PC-3 (cell line): ENCODE measurements at regions of chr14 and their contacts with region 1.

Region 1: DNA sequence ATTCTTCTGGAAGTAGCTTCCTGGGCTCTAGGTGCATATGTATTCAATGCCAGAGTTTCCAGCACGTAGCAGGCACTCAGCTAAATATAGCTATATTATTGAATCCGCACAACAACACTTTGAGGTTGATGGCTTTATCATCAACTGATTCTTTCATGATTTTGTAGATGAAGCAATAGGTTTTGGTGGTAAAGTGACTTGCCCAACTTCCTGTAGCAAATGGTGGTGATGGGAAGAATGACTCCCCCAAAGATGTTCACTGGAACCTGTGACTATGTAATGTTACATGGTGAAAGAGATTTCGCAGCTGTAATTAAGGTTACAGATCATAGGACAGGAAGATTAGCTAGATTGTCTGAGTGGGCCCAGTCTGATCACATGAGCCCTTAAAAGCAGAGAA is 3.2 kb downstream of the TDRD9 start:
- DNase-seq: no peak
- ATAC-seq: no peak
- H3K4me3 ChIP-seq: no peak overlapping the region
- H3K27ac ChIP-seq: no peak overlapping the region
- H3K4me1 ChIP-seq: peaks cover 17% of the 10 kb centered on the region
- H3K27me3 ChIP-seq: no peaks in the 10 kb centered on the region
- CTCF ChIP-seq: no peak

Region 2: DNA sequence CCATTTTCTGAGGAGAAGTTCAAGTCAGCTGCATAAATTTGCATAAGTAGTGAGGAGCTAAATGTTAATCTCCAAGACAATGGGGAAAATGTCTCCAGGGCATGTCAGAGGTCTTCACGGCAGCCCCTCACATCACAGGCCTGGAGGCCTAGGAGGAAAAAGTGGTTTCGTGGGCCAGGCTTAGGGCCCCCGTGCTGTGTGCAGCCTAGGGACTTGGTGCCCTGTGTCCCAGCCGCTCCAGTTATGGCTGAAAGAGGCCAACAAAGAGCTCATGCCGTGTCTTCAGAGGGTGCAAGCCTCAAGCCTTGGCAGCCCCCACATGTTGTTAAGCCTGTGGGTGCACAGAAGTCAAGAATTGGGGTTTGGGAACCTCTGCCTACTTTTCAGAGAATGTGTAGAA is 52.8 kb after region 1 on chr14:
- CTCF ChIA-PET with region 1: interaction called, 4 read pairs
- POLR2A ChIA-PET with region 1: no interaction called
- intact Hi-C with region 1: loop called (anchors 5 kb)
- DNase-seq: no peak
- ATAC-seq: no peak
- H3K4me3 ChIP-seq: no peak overlapping the region
- H3K27ac ChIP-seq: no peak overlapping the region
- H3K4me1 ChIP-seq: no peaks in the 10 kb centered on the region
- H3K27me3 ChIP-seq: no peaks in the 10 kb centered on the region
- CTCF ChIP-seq: no peak